ENCODE measurements at regions of chr11 and their contacts with region 1.

Region 1: GRCh38 chr11:57249384-57250319 is 12.6 kb upstream of the APLNR start:
- DNase-seq: peak; percentile 55
- H3K4me3 Mint-ChIP-seq: no peak overlapping the region
- H3K27ac Mint-ChIP-seq: no peak overlapping the region
- H3K4me1 Mint-ChIP-seq: peaks cover 6% of the 10 kb centered on the region
- H3K27me3 Mint-ChIP-seq: peaks cover 26% of the 10 kb centered on the region

Region 2: GRCh38 chr11:56841210-56841810 is 408.3 kb before region 1 on chr11:
- CTCF ChIA-PET with region 1: interaction called, 76 read pairs
- POLR2A ChIA-PET with region 1: no interaction called
- DNase-seq: peak; percentile 20
- H3K4me3 Mint-ChIP-seq: no peak overlapping the region
- H3K27ac Mint-ChIP-seq: no peak overlapping the region
- H3K4me1 Mint-ChIP-seq: no peaks in the 10 kb centered on the region
- H3K27me3 Mint-ChIP-seq: no peaks in the 10 kb centered on the region

Region 3: GRCh38 chr11:57116654-57117053 is 133.0 kb before region 1 on chr11:
- CTCF ChIA-PET with region 1: interaction called, 25 read pairs
- POLR2A ChIA-PET with region 1: no interaction called
- DNase-seq: peak; percentile 17
- H3K4me3 Mint-ChIP-seq: no peak overlapping the region
- H3K27ac Mint-ChIP-seq: no peak overlapping the region
- H3K4me1 Mint-ChIP-seq: no peaks in the 10 kb centered on the region
- H3K27me3 Mint-ChIP-seq: no peaks in the 10 kb centered on the region

Region 4: GRCh38 chr11:57186349-57186748 is 63.3 kb before region 1 on chr11:
- CTCF ChIA-PET with region 1: no interaction called
- POLR2A ChIA-PET with region 1: no interaction called
- DNase-seq: no peak
- H3K4me3 Mint-ChIP-seq: no peak overlapping the region
- H3K27ac Mint-ChIP-seq: no peak overlapping the region
- H3K4me1 Mint-ChIP-seq: no peaks in the 10 kb centered on the region
- H3K27me3 Mint-ChIP-seq: no peaks in the 10 kb centered on the region

Region 5: DNA sequence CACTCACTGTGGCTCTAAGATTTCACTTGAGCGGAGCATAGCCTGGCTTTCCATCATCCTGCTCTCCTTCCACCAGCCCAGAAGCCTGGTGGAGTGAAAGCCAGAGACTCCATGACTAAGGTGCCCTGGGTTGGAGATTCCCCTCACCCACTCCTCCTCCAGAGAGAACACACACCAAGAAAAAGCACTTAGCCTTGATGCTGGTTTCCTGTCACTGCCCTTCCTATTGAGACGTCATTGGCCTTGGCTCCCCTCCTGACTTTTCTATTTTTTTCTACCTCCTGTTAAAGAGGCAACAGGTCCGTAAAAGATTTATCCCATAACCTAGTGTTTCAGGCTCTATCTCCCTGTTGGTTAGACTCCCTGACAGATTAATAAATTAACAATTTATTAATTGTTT is 25.9 kb after region 1 on chr11:
- CTCF ChIA-PET with region 1: interaction called, 12 read pairs
- POLR2A ChIA-PET with region 1: no interaction called
- DNase-seq: no peak
- H3K4me3 Mint-ChIP-seq: no peak overlapping the region
- H3K27ac Mint-ChIP-seq: no peak overlapping the region
- H3K4me1 Mint-ChIP-seq: peaks cover 2% of the 10 kb centered on the region
- H3K27me3 Mint-ChIP-seq: peaks cover 31% of the 10 kb centered on the region

Measured in activated CD4-positive, alpha-beta memory T cell treated with anti-CD3 and anti-CD28 coated beads, Interleukin-2, amount 10 ng/mL, durations not matched to agents 7 days and 5 days (primary cell).